Calu3 (cell line): ENCODE measurements at regions of chr1 and their contacts with region 1.

Region 1: DNA sequence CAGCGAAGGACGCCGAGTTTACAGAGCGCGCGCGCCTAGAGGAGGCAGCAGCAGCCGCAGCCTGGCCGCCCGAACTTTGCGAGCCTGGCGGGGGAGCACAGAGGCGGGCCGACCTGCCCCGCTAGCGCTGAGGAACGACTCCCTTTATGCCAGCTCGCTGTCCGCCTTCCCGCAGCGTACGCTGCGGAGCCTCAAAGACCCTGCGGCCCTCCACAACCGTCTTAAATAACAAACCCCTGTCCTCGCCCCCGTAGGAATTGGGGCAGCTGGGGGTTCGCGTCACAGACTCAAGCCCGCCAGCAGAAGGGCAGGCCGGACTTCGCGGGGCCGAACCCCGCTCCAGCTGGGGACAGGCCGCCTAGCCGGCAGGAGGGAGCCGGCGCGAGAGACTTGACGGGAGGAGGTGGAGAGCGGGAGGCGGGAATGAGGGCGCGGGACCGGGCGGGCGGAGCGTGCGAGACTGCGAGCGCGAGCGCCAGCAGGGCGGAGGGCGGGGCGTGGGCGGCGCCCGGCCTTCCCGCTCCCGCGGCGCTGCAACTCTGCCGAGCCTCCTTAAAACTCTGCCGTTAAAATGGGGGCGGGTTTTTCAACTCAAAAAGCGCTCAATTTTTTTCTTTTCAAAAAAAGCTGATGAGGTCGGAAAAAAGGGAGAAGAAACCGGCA is 1.8 kb upstream of the CDKN2C start:
- DNase-seq: peak; percentile 95
- H3K4me3 Mint-ChIP-seq: peak overlapping the region; percentile 89
- H3K27ac Mint-ChIP-seq: peak overlapping the region; percentile 72
- H3K4me1 Mint-ChIP-seq: peaks cover 10% of the 10 kb centered on the region
- H3K27me3 Mint-ChIP-seq: no peaks in the 10 kb centered on the region
- CTCF ChIP-seq: no peak

Region 2: DNA sequence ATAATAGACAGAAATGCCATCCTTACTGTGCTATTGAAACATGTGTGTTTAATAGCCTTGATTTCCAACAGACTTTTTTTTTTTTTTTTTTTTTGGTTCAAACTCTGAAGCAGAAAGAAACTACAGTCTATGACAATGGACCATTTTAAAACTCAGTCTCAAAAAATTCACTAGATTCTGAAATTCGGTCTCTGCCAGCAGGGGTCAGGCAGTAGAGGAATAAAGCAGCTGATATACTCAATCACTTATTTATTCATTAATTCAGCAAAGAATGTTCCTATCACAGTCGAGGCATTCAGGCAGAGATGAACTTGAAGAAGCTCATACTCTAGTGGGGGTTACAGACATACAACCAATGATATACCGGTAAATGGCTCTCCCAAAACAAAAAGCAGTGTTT is 284.1 kb before region 1 on chr1:
- CTCF ChIA-PET with region 1: no interaction called
- intact Hi-C with region 1: no loop called
- DNase-seq: no peak
- H3K4me3 Mint-ChIP-seq: no peak overlapping the region
- H3K27ac Mint-ChIP-seq: no peak overlapping the region
- H3K4me1 Mint-ChIP-seq: no peaks in the 10 kb centered on the region
- H3K27me3 Mint-ChIP-seq: no peaks in the 10 kb centered on the region
- CTCF ChIP-seq: no peak

Region 3: GRCh38 chr1:50929376-50929958 is 38.8 kb before region 1 on chr1:
- CTCF ChIA-PET with region 1: interaction called, 4 read pairs
- intact Hi-C with region 1: loop called (anchors 5 kb)
- DNase-seq: no peak
- H3K4me3 Mint-ChIP-seq: no peak overlapping the region
- H3K27ac Mint-ChIP-seq: no peak overlapping the region
- H3K4me1 Mint-ChIP-seq: peaks cover 17% of the 10 kb centered on the region
- H3K27me3 Mint-ChIP-seq: no peaks in the 10 kb centered on the region
- CTCF ChIP-seq: peak; percentile 20

Region 4: GRCh38 chr1:50955116-50955515 is 13.2 kb before region 1 on chr1:
- CTCF ChIA-PET with region 1: no interaction called
- intact Hi-C with region 1: no loop called
- DNase-seq: no peak
- H3K4me3 Mint-ChIP-seq: no peak overlapping the region
- H3K27ac Mint-ChIP-seq: no peak overlapping the region
- H3K4me1 Mint-ChIP-seq: peaks cover 29% of the 10 kb centered on the region
- H3K27me3 Mint-ChIP-seq: no peaks in the 10 kb centered on the region
- CTCF ChIP-seq: no peak

Region 5: DNA sequence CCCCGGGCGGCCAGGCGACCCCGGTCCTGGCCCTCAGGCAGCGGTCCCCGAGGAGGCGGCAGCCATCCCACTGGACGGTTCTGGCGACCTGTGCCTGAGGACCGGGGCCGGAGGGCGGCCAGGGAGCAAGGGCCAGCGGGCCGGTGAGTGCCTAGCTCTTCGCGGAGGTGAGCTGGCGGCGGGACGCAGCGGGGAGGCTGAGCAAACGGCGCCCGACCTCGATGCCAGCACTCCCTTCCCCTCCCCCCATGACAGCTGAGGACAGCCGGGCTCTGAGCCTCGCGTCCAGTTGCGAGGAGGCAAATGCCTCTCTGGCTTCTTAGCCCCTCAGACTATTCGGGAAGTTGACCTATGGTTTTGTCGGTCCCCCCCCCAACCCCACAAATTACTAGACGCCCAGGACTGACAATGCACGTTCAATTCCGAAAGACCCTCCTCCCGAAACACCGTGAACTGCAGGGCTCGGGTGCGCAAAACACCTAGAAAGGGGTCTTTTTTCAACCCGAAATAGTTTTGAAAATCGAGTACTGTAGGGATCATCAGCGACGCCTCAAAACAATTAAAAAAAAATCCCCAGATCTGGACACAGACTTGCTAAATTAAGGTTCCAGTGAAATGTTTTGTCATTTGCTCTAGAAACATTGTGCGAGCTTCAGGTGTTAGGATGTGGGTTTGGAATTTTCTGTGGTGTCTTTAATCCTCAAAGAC is 10.0 kb after region 1 on chr1:
- CTCF ChIA-PET with region 1: interaction called, 7 read pairs
- intact Hi-C with region 1: loop called (anchors 1 kb)
- DNase-seq: peak; percentile 82
- H3K4me3 Mint-ChIP-seq: peak overlapping the region; percentile 78
- H3K27ac Mint-ChIP-seq: peak overlapping the region; percentile 96
- H3K4me1 Mint-ChIP-seq: peaks cover 24% of the 10 kb centered on the region
- H3K27me3 Mint-ChIP-seq: no peaks in the 10 kb centered on the region
- CTCF ChIP-seq: no peak

Region 6: GRCh38 chr1:51009381-51009780 is 41.1 kb after region 1 on chr1:
- CTCF ChIA-PET with region 1: no interaction called
- intact Hi-C with region 1: no loop called
- DNase-seq: no peak
- H3K4me3 Mint-ChIP-seq: no peak overlapping the region
- H3K27ac Mint-ChIP-seq: no peak overlapping the region
- H3K4me1 Mint-ChIP-seq: no peaks in the 10 kb centered on the region
- H3K27me3 Mint-ChIP-seq: no peaks in the 10 kb centered on the region
- CTCF ChIP-seq: no peak

Region 7: DNA sequence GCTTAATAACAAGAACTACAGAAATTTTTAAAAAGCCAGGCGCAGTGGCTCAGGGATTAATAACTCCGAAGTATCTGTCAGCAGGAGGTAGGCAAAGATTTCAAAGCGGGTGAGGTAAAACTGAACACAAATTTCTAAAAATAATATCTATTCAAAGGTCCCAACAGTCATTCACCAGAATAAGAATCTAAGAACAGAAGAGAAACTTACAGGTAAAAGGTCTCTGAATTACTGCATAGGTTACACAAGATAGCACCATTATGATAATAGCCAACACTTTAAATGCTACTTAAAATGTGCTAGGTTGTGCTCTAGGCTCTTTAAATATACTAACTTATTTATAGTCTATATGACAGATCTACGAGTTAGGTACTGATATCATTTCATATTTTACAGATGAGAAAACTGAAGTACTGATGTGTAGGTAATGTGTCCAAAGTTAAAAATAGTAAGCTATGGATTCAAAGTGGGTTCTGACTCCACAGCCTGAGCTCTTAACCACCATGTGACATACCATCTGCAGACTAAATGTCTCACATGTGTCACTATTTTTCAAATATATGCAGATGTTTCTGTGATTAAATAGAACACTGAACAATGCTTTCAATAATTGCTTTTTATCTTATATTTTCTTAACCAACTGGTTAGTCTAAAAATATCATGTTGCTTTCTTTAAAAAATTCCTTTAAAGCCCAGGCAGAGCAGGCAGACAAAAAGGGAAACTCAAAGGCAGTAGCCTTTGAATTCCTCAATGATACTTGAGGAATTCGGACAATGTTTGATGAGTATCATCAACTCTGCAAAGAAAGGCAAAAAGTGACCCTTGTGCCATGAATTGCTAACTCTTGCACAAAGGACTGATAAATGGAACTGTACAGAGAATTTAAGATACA is 442.5 kb after region 1 on chr1:
- CTCF ChIA-PET with region 1: no interaction called
- intact Hi-C with region 1: no loop called
- DNase-seq: no peak
- H3K4me3 Mint-ChIP-seq: no peak overlapping the region
- H3K27ac Mint-ChIP-seq: no peak overlapping the region
- H3K4me1 Mint-ChIP-seq: no peaks in the 10 kb centered on the region
- H3K27me3 Mint-ChIP-seq: no peaks in the 10 kb centered on the region
- CTCF ChIP-seq: no peak